Mammary epithelial cell (primary cell): ENCODE measurements at regions of chr2 and their contacts with region 1.

Region 1: DNA sequence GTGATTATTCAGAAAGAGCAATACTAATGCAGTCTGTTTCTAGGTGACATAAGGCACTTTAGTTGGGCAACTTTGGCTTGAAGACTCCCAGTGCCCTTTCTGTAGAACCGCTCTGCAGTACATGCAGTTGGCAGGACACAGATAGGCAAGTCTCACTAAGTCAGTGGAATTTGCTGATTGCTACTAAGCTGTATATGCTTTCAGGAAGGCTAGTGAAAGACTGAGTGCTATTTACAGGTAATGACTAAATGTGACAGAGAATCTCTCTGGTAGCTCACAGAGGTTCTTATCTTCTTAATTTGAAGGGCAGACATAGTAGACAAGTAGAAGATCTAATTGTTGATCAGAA is 243.0 kb downstream of the WDPCP start:
- DNase-seq: no peak
- H3K4me3 ChIP-seq: no peak overlapping the region
- H3K27ac ChIP-seq: no peak overlapping the region
- H3K4me1 ChIP-seq: peaks cover 3% of the 10 kb centered on the region
- H3K27me3 ChIP-seq: no peaks in the 10 kb centered on the region
- CTCF ChIP-seq: no peak

Region 2: DNA sequence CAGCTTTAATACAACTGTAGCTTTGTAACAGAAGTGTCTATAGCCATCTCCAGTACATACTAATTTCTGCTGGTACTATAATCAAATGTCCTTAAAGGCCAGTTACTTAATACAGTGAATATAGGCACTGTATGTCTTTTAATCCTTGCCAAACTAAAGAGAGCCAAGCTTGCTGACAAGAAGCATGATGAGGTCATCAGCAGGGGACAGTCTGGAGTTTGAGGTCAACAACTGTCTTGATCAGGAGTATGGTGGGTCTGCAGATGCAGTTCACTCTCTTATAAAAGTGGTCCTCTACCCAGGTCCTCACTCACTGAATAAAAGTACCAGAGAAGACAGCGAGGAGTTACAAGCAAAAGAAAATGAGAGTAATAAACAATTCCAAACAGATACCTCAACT is 23.9 kb after region 1 on chr2:
- CTCF ChIA-PET with region 1: no interaction called
- dilution Hi-C with region 1: no loop called
- in situ Hi-C with region 1: no loop called
- intact Hi-C with region 1: loop called (anchors 2 kb)
- DNase-seq: no peak
- H3K4me3 ChIP-seq: no peak overlapping the region
- H3K27ac ChIP-seq: no peak overlapping the region
- H3K4me1 ChIP-seq: no peaks in the 10 kb centered on the region
- H3K27me3 ChIP-seq: no peaks in the 10 kb centered on the region
- CTCF ChIP-seq: no peak

Region 3: GRCh38 chr2:63497576-63497975 is 152.3 kb after region 1 on chr2:
- CTCF ChIA-PET with region 1: no interaction called
- dilution Hi-C with region 1: no loop called
- in situ Hi-C with region 1: no loop called
- intact Hi-C with region 1: no loop called
- DNase-seq: peak; percentile 2
- H3K4me3 ChIP-seq: no peak overlapping the region
- H3K27ac ChIP-seq: no peak overlapping the region
- H3K4me1 ChIP-seq: no peaks in the 10 kb centered on the region
- H3K27me3 ChIP-seq: no peaks in the 10 kb centered on the region
- CTCF ChIP-seq: no peak